ENCODE measurements at regions of chr3 and their contacts with region 1.

Region 1: DNA sequence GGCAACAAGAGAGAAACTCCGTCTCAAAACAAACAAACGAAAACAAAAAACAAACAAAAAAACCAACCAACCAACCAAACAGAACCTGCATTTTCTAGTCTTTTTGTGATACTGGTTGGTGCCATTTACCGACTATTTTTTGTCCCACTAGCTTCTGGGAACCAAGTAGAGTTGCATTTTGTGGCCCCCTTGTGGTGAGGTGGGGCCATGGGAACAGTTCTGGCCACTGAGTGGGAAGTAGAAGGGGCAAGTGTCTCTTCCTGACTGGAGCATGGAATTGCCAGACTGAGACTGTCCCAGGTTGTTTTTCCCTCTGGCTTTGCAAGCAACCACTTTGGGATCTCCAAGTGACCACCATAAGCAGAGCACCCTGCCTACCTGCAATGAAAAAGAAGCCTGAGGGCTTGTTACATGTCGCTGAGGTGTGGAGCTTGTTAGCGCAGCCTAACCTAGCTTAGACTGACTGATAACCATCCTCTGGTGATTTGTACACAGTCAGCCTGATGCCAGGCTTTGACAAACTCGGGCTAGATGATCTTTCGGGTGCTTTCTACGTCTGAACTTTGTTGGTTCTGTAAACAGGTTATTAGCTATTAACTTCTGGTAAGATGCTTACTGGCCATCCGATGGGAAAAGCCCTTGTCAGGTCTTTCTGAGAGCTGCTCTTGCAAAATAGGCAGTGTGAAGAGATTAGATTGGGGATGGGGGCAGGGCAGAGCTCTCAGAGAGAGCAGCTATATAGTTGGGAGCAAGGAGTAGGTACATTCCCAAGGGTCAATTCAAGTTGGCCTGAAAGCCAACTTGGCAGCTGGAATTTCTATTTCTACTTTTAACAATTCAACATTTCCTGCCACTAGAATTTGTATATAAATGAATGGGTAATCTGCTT is 172.2 kb downstream of the SSR3 start:
- DNase-seq: peak in 1 of 2 experiments; percentile 80
- H3K4me3 ChIP-seq: no peak overlapping the region
- H3K27ac ChIP-seq: no peak overlapping the region
- H3K4me1 ChIP-seq: no peaks in the 10 kb centered on the region
- H3K27me3 ChIP-seq: no peaks in the 10 kb centered on the region
- CTCF ChIP-seq: peak; percentile 80 to 86 (median 86)
- EP300 ChIP-seq: no peak
- POLR2A ChIP-seq: no peak
- RAD21 ChIP-seq: peak; percentile 83 to 90

Region 2: GRCh38 chr3:156174229-156174847 is 208.4 kb before region 1 on chr3:
- CTCF ChIA-PET with region 1: interaction called, 38 read pairs
- POLR2A ChIA-PET with region 1: no interaction called
- DNase-seq: no peak
- H3K4me3 ChIP-seq: no peak overlapping the region
- H3K27ac ChIP-seq: no peak overlapping the region
- H3K4me1 ChIP-seq: no peaks in the 10 kb centered on the region
- H3K27me3 ChIP-seq: no peaks in the 10 kb centered on the region
- CTCF ChIP-seq: peak in 2 of 3 experiments; percentile 43 to 62; a peak in 3 of 4 replicates
- EP300 ChIP-seq: no peak
- POLR2A ChIP-seq: no peak
- RAD21 ChIP-seq: peak; percentile 80 to 84

Region 3: GRCh38 chr3:156356537-156357363 is 26.0 kb before region 1 on chr3:
- CTCF ChIA-PET with region 1: interaction called, 30 read pairs
- POLR2A ChIA-PET with region 1: no interaction called
- DNase-seq: no peak
- H3K4me3 ChIP-seq: no peak overlapping the region
- H3K27ac ChIP-seq: no peak overlapping the region
- H3K4me1 ChIP-seq: peaks cover 0 to 6% (median 0%) of the 10 kb centered on the region in 4 experiments; a peak in 3 of 7 replicates
- H3K27me3 ChIP-seq: no peaks in the 10 kb centered on the region
- CTCF ChIP-seq: no peak
- EP300 ChIP-seq: no peak
- POLR2A ChIP-seq: no peak
- RAD21 ChIP-seq: no peak

Region 4: GRCh38 chr3:156396851-156397250 is 14.1 kb after region 1 on chr3:
- CTCF ChIA-PET with region 1: interaction called, 14 read pairs
- POLR2A ChIA-PET with region 1: no interaction called
- DNase-seq: no peak
- H3K4me3 ChIP-seq: no peak overlapping the region
- H3K27ac ChIP-seq: no peak overlapping the region
- H3K4me1 ChIP-seq: no peaks in the 10 kb centered on the region
- H3K27me3 ChIP-seq: no peaks in the 10 kb centered on the region
- CTCF ChIP-seq: no peak
- EP300 ChIP-seq: no peak
- POLR2A ChIP-seq: no peak
- RAD21 ChIP-seq: no peak

Region 5: GRCh38 chr3:156413293-156413892 is 30.7 kb after region 1 on chr3:
- CTCF ChIA-PET with region 1: no interaction called
- POLR2A ChIA-PET with region 1: no interaction called
- DNase-seq: no peak
- H3K4me3 ChIP-seq: no peak overlapping the region
- H3K27ac ChIP-seq: no peak overlapping the region
- H3K4me1 ChIP-seq: peaks cover 0 to 4% (median 2%) of the 10 kb centered on the region in 4 experiments; a peak in 2 of 7 replicates
- H3K27me3 ChIP-seq: no peaks in the 10 kb centered on the region
- CTCF ChIP-seq: no peak
- EP300 ChIP-seq: no peak
- POLR2A ChIP-seq: no peak
- RAD21 ChIP-seq: no peak

Region 6: GRCh38 chr3:156576651-156577343 is 194.1 kb after region 1 on chr3:
- CTCF ChIA-PET with region 1: no interaction called
- POLR2A ChIA-PET with region 1: no interaction called
- DNase-seq: no peak
- H3K4me3 ChIP-seq: no peak overlapping the region
- H3K27ac ChIP-seq: no peak overlapping the region
- H3K4me1 ChIP-seq: peaks cover 0 to 3% (median under 1%) of the 10 kb centered on the region in 4 experiments; a peak in 2 of 7 replicates
- H3K27me3 ChIP-seq: no peaks in the 10 kb centered on the region
- CTCF ChIP-seq: no peak
- EP300 ChIP-seq: no peak
- POLR2A ChIP-seq: no peak
- RAD21 ChIP-seq: 0 out of 4 replicates have a peak, but pooled peaks of 1 of the 2 experiments have one; percentile 11